Activated CD4-positive, alpha-beta memory T cell treated with anti-CD3 and anti-CD28 coated beads for 36 hours (primary cell): ENCODE measurements at regions of chr3 and their contacts with region 1.

Region 1: GRCh38 chr3:71495708-71496472 is 87.6 kb downstream of the FOXP1 start:
- DNase-seq: peak; percentile 62
- H3K4me3 Mint-ChIP-seq: peak overlapping the region; percentile 58
- H3K27ac Mint-ChIP-seq: peak overlapping the region; percentile 77
- H3K4me1 Mint-ChIP-seq: peaks cover 73% of the 10 kb centered on the region
- H3K27me3 Mint-ChIP-seq: no peaks in the 10 kb centered on the region

Region 2: GRCh38 chr3:71380096-71380495 is 115.8 kb before region 1 on chr3:
- CTCF ChIA-PET with region 1: no interaction called
- POLR2A ChIA-PET with region 1: no interaction called
- intact Hi-C with region 1: loop called (anchors 1 kb)
- DNase-seq: no peak
- H3K4me3 Mint-ChIP-seq: no peak overlapping the region
- H3K27ac Mint-ChIP-seq: peak overlapping the region; percentile 85
- H3K4me1 Mint-ChIP-seq: peaks cover 82% of the 10 kb centered on the region
- H3K27me3 Mint-ChIP-seq: no peaks in the 10 kb centered on the region

Region 3: DNA sequence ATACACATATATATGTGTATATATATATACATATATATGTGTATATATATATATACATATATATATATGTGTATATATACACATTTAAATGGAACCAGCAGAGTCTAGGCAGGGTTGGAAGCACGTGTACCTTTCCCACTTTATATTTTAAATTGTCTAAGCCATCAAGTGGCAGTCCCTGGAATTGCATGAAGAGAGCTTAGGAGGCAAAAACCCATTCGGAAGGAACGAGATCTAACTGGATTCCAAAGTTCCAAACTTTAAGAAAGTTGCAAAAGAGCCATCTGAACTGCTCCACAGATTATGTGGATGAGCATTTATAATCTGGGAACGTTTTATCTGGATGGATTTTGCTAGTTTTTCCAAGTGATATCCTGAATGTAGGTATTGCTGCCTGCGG is 98.8 kb before region 1 on chr3:
- CTCF ChIA-PET with region 1: interaction called, 3 read pairs
- POLR2A ChIA-PET with region 1: interaction called, 3 read pairs
- intact Hi-C with region 1: loop called (anchors 1 kb)
- DNase-seq: no peak
- H3K4me3 Mint-ChIP-seq: no peak overlapping the region
- H3K27ac Mint-ChIP-seq: no peak overlapping the region
- H3K4me1 Mint-ChIP-seq: peaks cover 72% of the 10 kb centered on the region
- H3K27me3 Mint-ChIP-seq: peaks cover 2% of the 10 kb centered on the region

Region 4: GRCh38 chr3:71423151-71423906 is 72.6 kb before region 1 on chr3:
- CTCF ChIA-PET with region 1: interaction called, 4 read pairs
- POLR2A ChIA-PET with region 1: no interaction called
- intact Hi-C with region 1: loop called (anchors 1 kb)
- DNase-seq: no peak
- H3K4me3 Mint-ChIP-seq: no peak overlapping the region
- H3K27ac Mint-ChIP-seq: peak overlapping the region; percentile 85
- H3K4me1 Mint-ChIP-seq: peaks cover 81% of the 10 kb centered on the region
- H3K27me3 Mint-ChIP-seq: no peaks in the 10 kb centered on the region

Region 5: DNA sequence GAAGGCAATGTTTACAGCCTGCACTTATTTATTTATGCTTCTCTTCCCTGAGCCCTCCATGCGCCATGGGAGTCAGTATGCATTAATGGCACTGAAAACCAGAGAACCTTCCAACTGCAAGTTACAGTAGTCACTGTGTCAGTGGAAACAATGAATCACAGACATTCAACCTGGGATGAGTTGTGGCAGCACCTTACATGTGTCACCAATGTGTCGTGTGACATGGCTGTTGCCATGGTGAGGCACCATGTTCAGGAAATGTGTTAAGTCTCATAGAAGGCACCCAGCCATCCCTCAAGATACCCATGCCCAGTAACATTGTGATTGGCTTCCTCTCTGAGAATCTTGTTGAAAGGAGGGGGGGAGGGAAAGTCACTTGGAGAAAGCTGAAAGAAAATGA is 17.3 kb before region 1 on chr3:
- CTCF ChIA-PET with region 1: no interaction called
- POLR2A ChIA-PET with region 1: interaction called, 3 read pairs
- intact Hi-C with region 1: loop called (anchors 1 kb)
- DNase-seq: peak; percentile 89
- H3K4me3 Mint-ChIP-seq: peak overlapping the region; percentile 33
- H3K27ac Mint-ChIP-seq: peak overlapping the region; percentile 84
- H3K4me1 Mint-ChIP-seq: peaks cover 66% of the 10 kb centered on the region
- H3K27me3 Mint-ChIP-seq: no peaks in the 10 kb centered on the region

Region 6: DNA sequence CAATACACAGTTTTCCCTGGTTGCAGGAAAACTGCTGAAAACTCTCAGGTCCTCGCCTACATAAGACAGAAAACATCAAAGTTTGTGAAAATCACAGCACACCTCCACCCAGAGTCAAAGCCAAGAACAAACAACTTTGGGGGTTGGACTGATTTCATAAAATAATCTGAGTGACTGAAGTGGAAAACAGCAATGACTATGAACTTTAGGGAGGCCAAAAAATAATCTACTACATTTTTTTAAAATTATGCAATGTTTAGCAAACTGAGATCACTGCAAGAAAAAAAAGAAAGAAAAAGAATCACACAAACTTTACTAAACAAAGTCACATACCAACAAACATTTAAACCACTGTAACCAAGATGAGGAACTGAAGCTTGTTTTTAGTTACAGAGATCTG is 103.5 kb after region 1 on chr3:
- CTCF ChIA-PET with region 1: no interaction called
- POLR2A ChIA-PET with region 1: no interaction called
- intact Hi-C with region 1: no loop called
- DNase-seq: no peak
- H3K4me3 Mint-ChIP-seq: no peak overlapping the region
- H3K27ac Mint-ChIP-seq: no peak overlapping the region
- H3K4me1 Mint-ChIP-seq: peaks cover 23% of the 10 kb centered on the region
- H3K27me3 Mint-ChIP-seq: no peaks in the 10 kb centered on the region